ENCODE measurements at regions of chr2 and their contacts with region 1.

Region 1: DNA sequence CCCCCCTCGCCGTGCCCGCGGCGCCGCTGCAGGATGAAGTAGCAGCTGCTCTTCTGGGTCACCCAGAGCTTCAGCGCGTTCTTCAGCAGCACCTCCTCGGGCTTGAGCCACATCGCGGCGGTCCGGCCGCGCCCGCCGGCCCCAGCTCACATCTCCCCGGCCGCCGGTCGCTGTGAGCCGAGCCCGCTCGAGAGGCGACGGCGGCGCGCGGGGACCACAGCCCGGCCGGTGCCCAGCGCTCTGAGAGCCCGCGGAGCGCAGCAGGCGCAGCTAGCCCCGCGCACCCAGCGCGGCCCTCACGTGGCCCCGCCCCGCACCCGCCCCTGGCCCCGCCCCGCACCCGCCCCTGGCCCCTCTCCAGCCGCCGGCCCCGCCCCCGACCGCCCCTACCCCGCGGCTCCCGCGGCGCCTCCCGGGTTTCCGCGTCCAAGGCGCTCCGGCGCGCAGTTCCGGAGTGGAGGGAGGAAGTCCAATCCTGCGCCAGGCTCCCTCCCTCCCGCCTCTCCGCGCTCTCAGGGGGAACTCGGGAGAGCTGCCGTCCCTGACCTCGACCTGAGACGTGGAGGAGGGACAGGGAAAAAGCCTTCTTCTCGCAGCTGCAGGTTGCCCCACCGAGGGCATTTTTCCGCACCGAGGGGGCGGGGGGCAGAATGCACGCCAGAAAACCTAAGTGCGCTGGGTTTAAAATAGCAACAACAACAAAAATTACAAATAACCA is at the start of gene TBC1D8:
- DNase-seq: peak; percentile 85 to 94 (median 93)
- ATAC-seq: peak; percentile 89
- H3K4me3 ChIP-seq: peak within 1 kb of the TSS; percentile 50
- H3K4me1 ChIP-seq: peaks cover 23% of the 10 kb centered on the region
- CTCF ChIP-seq: no peak
- total RNA-seq, gene TBC1D8: 14.4 to 28.8 (median 17.7) TPM

Region 2: DNA sequence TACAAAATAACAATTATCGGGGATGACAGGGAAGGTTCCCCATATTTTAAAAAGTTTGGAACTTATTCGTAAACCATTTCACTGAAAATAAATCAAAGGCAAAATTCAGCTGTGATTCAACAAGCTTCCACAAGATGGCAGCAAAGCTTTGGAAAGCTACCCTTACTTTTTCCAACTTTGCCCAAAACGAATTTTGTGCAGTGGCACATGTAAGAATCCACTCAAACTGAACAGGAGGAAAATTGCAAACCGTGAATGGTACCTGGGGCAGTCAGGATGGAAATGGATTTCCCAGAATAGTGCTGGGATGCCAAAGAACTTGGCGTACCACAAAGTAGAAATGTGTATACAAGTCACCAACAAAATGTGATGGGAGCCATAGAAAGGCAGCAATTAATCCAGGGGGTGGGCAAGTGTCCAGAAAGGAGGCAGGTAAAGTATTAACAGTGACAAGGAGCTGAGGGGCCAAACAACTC is 138.6 kb before region 1 on chr2:
- intact Hi-C with region 1: loop called in 1 of 2 experiments (anchors 5 kb)
- DNase-seq: peak in 1 of 3 donors; percentile 72
- ATAC-seq: peak; percentile 65
- H3K4me3 ChIP-seq: no peak overlapping the region
- H3K4me1 ChIP-seq: no peaks in the 10 kb centered on the region
- CTCF ChIP-seq: peak; percentile 70

Region 3: GRCh38 chr2:101036562-101037457 is 114.5 kb before region 1 on chr2:
- intact Hi-C with region 1: loop called in 1 of 2 experiments (anchors 10 kb)
- DNase-seq: no peak
- ATAC-seq: no peak
- H3K4me3 ChIP-seq: no peak overlapping the region
- H3K4me1 ChIP-seq: no peaks in the 10 kb centered on the region
- CTCF ChIP-seq: no peak